ENCODE measurements at regions of chr6 and their contacts with region 1.

Region 1: DNA sequence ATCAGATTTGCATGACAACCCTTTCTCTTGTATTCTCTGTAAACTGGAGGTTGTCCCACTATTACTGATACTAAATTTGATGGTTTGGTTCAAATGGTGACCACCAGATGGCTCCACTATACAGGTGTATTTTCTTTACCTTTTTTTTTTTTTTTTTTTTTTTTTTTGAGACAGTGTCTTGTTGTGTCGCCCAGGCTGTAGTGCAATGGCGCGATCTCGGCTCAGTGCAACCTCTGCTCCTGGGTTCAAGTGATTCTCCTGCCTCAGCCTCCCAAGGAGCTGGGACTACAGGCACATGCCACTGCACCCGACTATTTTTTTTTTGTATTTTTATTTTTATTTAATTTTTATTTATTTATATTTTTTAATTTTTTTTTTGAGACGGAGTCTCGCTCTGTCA is 6.6 kb upstream of the WTAP start:
- DNase-seq: no peak
- ATAC-seq: peak; percentile 71
- H3K4me3 ChIP-seq: no peak overlapping the region
- H3K27ac ChIP-seq: no peak overlapping the region
- H3K4me1 ChIP-seq: no peaks in the 10 kb centered on the region
- H3K27me3 ChIP-seq: no peaks in the 10 kb centered on the region
- CTCF ChIP-seq: peak; percentile 27 to 49 (median 27); a peak in 4 of 6 replicates
- EP300 ChIP-seq: no peak
- POLR2A ChIP-seq: no peak
- RAD21 ChIP-seq: peak; percentile 59

Region 2: DNA sequence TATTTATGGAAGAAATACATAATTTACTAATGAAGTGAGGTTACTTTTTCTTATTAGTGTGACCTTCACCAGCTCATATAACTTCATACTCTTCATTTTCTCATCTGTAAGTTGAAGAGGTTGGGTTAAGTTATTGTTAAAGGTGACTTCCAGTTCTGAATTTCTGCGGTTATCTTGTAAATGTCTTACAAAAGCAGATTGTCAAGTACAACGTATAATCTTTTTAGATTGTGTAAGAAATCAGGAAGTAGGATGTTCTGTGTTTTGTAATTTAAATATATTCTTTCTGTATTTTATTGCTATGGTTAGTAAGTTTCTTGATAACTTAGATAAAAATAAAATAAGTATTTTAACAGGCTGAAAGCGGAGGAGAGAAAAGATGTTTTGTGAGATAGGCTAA is 18.6 kb after region 1 on chr6:
- CTCF ChIA-PET with region 1: interaction called, 11 read pairs
- POLR2A ChIA-PET with region 1: no interaction called
- RAD21 ChIA-PET with region 1: interaction called, 4 read pairs
- SMC1A ChIA-PET with region 1: interaction called, 18 read pairs
- in situ Hi-C with region 1: no loop called
- intact Hi-C with region 1: no loop called
- DNase-seq: no peak
- ATAC-seq: no peak
- H3K4me3 ChIP-seq: no peak overlapping the region
- H3K27ac ChIP-seq: no peak overlapping the region
- H3K4me1 ChIP-seq: no peaks in the 10 kb centered on the region
- H3K27me3 ChIP-seq: no peaks in the 10 kb centered on the region
- CTCF ChIP-seq: no peak
- EP300 ChIP-seq: no peak
- POLR2A ChIP-seq: no peak
- RAD21 ChIP-seq: no peak

Region 3: DNA sequence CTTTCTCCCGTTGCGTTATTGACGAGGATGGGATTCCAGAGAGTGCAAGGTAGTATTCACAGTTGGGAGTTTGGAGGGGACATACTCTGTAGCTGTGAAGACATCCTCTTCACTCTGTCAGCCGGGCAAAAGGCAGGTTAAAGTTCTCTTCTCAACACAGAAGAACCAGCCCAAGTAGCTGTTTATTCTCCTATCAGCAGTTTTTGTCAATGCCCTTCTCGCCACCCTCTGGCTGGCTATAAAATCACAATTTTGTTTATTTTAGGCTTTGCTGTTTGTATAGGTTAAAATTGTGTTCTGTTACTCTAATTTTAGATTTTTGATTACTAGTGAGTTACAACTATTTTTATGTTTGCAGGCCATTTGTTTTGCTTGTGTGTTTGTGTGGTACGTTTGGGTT is 132.2 kb after region 1 on chr6:
- CTCF ChIA-PET with region 1: interaction called, 10 read pairs
- POLR2A ChIA-PET with region 1: no interaction called
- RAD21 ChIA-PET with region 1: interaction called, 7 read pairs
- SMC1A ChIA-PET with region 1: interaction called, 11 read pairs
- in situ Hi-C with region 1: no loop called
- intact Hi-C with region 1: no loop called
- DNase-seq: no peak
- ATAC-seq: peak; percentile 66
- H3K4me3 ChIP-seq: no peak overlapping the region
- H3K27ac ChIP-seq: no peak overlapping the region
- H3K4me1 ChIP-seq: no peaks in the 10 kb centered on the region
- H3K27me3 ChIP-seq: no peaks in the 10 kb centered on the region; a peak in 2 of 4 replicates
- CTCF ChIP-seq: peak in 2 of 3 experiments; percentile 34 to 50; a peak in 3 of 6 replicates
- EP300 ChIP-seq: no peak
- POLR2A ChIP-seq: no peak
- RAD21 ChIP-seq: peak; percentile 53

Region 4: GRCh38 chr6:160455541-160456213 is 735.0 kb after region 1 on chr6:
- CTCF ChIA-PET with region 1: interaction called, 5 read pairs
- POLR2A ChIA-PET with region 1: no interaction called
- RAD21 ChIA-PET with region 1: interaction called, 3 read pairs
- SMC1A ChIA-PET with region 1: no interaction called
- in situ Hi-C with region 1: loop called (anchors 25 kb)
- intact Hi-C with region 1: no loop called
- DNase-seq: peak; percentile 5
- ATAC-seq: peak; percentile 90
- H3K4me3 ChIP-seq: no peak overlapping the region
- H3K27ac ChIP-seq: no peak overlapping the region
- H3K4me1 ChIP-seq: no peaks in the 10 kb centered on the region
- H3K27me3 ChIP-seq: no peaks in the 10 kb centered on the region; a peak in 1 of 4 replicates
- CTCF ChIP-seq: peak; percentile 85 to 93 (median 89)
- EP300 ChIP-seq: no peak
- POLR2A ChIP-seq: no peak
- RAD21 ChIP-seq: peak; percentile 98

Measured in GM12878 (cell line).